ENCODE measurements at regions of chr18 and their contacts with region 1.

Region 1: GRCh38 chr18:31977270-31977872 is 34.4 kb upstream of the TRAPPC8 start:
- DNase-seq: peak in 2 of 5 donors; percentile 28 to 43
- ATAC-seq: peak in 3 of 4 donors; percentile 66 to 68 (median 67)
- H3K4me3 ChIP-seq: no peak overlapping the region
- H3K27ac ChIP-seq: no peak overlapping the region
- H3K4me1 ChIP-seq: peaks cover 0 to 2% (median 0%) of the 10 kb centered on the region in 12 donors
- H3K27me3 ChIP-seq: no peaks in the 10 kb centered on the region
- CTCF ChIP-seq: peak; percentile 61 to 82 (median 72)
- POLR2A ChIP-seq: no peak

Region 2: GRCh38 chr18:31555971-31556747 is 421.2 kb before region 1 on chr18:
- intact Hi-C with region 1: loop called in 7 of 10 experiments (anchors 2 to 10 kb)
- DNase-seq: peak in 1 of 5 donors; percentile 12
- ATAC-seq: peak in 3 of 4 donors; percentile 51 to 73 (median 63)
- H3K4me3 ChIP-seq: peak overlapping the region in 1 of 12 donors; percentile 21
- H3K27ac ChIP-seq: no peak overlapping the region
- H3K4me1 ChIP-seq: no peaks in the 10 kb centered on the region
- H3K27me3 ChIP-seq: peaks cover 0 to 12% (median 0%) of the 10 kb centered on the region in 9 donors
- CTCF ChIP-seq: peak; percentile 78 to 90 (median 82)
- POLR2A ChIP-seq: no peak

Region 3: DNA sequence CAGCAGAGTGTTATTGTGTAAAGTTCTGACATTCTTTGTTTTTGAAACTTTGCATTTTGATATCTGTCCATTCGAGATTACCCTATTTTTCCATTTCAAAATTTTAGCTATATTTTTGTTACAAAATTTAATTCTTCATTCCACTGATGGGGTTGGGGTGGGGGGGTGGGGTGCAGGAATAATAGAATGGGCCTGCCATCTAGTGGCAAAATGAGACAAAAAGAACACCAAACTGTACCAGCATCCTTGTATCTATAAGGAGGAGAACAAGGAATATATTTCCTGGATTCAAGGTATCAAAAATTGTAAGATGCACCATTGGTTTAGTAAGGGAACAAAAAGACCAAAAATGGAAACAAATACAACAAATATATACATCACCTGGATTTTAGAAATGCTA is 413.6 kb before region 1 on chr18:
- intact Hi-C with region 1: loop called in 6 of 10 experiments (anchors 10 kb)
- DNase-seq: no peak
- ATAC-seq: no peak
- H3K4me3 ChIP-seq: no peak overlapping the region
- H3K27ac ChIP-seq: no peak overlapping the region
- H3K4me1 ChIP-seq: peaks cover 0 to 5% (median 0%) of the 10 kb centered on the region in 12 donors
- H3K27me3 ChIP-seq: peaks cover 0 to 12% (median 0%) of the 10 kb centered on the region in 9 donors
- CTCF ChIP-seq: peak in 5 of 12 donors; percentile 5 to 28 (median 22)
- POLR2A ChIP-seq: no peak

Region 4: DNA sequence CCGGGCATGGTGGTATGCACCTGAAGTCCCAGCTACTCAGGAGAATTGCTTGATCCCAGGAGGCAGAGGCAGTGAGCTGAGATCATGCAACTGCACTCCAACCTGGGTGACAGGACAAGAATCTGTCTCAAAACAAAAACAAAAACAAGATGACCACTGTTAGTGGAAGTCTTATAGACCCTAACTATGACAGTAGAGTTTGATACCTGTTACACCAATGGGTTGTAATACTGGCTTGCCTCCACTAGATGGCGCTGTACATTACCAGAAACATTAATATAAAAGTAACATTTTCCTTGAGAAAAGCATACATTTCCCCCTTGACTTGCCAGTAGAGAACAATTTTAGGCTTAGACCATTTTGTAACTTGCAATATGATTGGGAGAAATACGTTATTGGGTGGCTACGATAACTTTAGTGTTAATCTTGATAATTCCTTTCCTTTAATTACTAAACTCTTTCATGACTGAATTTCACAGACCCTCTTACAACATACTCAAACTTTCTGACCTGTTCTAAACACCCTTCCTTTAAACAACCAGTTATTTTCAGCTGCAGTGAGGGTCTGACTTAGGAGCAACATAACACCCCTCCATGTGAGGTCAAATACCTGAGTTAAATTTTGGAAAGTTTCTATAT is 236.2 kb before region 1 on chr18:
- intact Hi-C with region 1: loop called (anchors 1 to 5 kb)
- DNase-seq: no peak
- ATAC-seq: no peak
- H3K4me3 ChIP-seq: no peak overlapping the region
- H3K27ac ChIP-seq: no peak overlapping the region
- H3K4me1 ChIP-seq: peaks cover 0 to 7% (median 0%) of the 10 kb centered on the region in 12 donors
- H3K27me3 ChIP-seq: no peaks in the 10 kb centered on the region
- CTCF ChIP-seq: peak; percentile 82 to 95 (median 91)
- POLR2A ChIP-seq: no peak

Region 5: DNA sequence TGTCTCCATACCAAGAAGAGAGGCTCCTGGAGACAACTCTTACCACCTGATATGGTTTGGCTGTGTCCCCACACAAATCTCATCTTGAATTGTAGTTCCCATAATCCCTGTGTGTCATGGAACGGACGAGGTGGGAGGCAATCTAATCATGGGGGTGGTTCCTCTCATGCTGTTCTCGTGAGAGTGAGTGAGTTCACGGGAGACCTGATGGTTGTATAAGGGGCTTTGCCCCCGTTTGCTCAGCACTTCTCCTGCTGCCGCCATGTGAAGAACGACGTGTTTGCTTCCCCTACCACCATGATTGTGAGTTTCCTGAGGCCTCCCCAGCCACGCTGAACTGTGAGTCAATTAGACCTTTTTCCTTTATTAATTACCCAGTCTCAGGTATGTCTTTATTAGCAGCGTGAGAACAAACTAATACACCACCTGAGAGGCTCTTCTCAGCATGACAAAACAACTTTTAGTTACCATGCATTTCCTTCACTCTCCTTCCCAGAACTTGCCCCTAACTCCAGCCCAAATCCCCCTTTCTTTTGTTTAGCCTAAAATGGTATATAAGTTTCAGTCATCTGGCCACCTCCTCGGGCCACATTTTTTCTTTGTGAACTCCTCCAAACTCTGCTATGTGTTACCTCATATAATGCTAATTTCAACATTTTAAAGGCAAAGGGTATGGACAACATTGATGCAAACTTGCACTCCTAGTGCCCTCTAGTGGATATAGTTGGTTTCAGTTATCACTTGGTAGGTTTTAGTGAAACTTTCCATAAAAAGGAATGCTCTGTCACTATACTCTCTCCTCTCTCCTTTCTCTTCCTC is 158.1 kb before region 1 on chr18:
- intact Hi-C with region 1: loop called in 2 of 10 experiments (anchors 10 kb)
- DNase-seq: no peak
- ATAC-seq: peak in 1 of 4 donors; percentile 56
- H3K4me3 ChIP-seq: no peak overlapping the region
- H3K27ac ChIP-seq: no peak overlapping the region
- H3K4me1 ChIP-seq: peaks cover 0 to 6% (median 0%) of the 10 kb centered on the region in 12 donors
- H3K27me3 ChIP-seq: no peaks in the 10 kb centered on the region
- CTCF ChIP-seq: peak; percentile 53 to 79 (median 70)
- POLR2A ChIP-seq: no peak

Region 6: GRCh38 chr18:31918733-31919132 is 58.6 kb before region 1 on chr18:
- intact Hi-C with region 1: no loop called
- DNase-seq: no peak
- ATAC-seq: no peak
- H3K4me3 ChIP-seq: no peak overlapping the region
- H3K27ac ChIP-seq: no peak overlapping the region
- H3K4me1 ChIP-seq: peaks cover 0 to 5% (median 0%) of the 10 kb centered on the region in 12 donors
- H3K27me3 ChIP-seq: no peaks in the 10 kb centered on the region
- CTCF ChIP-seq: no peak
- POLR2A ChIP-seq: no peak

Region 7: DNA sequence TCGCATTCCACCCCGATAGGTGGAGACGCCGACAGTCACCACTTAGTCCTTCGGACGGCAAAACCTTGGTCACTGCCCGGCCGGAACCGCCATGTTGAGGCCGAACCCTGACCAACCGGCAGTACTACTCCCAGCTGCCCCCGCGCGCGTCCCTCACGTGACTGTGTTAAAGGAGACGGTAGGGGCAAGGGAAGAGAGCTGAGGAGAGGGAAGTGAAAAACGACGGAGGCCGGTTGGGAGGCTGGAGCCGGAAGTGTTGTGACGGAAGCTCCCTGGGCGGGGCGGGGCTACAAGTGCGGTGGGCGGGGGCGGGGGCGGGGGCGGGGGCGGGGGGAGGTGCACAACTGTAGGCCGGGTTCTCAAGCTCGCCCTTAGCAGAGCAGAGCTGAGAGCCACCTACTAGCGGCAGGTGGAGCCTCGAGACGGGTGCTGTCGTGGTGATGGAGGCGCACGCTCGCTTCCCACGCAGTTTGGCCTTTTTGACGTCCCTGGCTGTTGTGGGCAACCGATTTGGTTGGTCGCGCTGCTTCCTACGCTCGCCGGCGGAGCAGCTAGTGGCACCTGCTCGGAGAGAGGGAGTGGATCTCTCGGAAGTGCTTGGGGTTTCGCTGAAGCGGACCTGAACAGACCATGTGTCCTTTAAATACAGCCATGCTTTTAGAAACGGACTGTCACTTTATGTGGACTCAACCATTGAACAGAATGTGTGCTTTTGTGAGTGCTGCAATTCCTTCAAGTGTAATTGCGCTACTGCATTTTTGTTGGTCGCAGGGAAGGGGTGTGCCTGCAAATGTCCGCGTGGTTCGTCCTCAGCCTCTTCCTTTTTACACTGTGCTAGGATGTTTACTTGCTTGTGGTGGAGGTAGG is 34.1 kb before region 1 on chr18 and contains the start of gene TRAPPC8:
- intact Hi-C with region 1: loop called in 1 of 10 experiments (anchors 2 kb)
- DNase-seq: peak; percentile 98 to 99 (median 98)
- ATAC-seq: peak; percentile 99
- H3K4me3 ChIP-seq: peak within 1 kb of the TSS; percentile 70 to 97 (median 86)
- H3K27ac ChIP-seq: peak within 1 kb of the TSS; percentile 80 to 95 (median 92)
- H3K4me1 ChIP-seq: peaks cover 3 to 45% (median 30%) of the 10 kb centered on the region in 12 donors
- H3K27me3 ChIP-seq: no peaks in the 10 kb centered on the region
- CTCF ChIP-seq: peak in 3 of 12 donors; percentile 28 to 39 (median 37)
- POLR2A ChIP-seq: no peak
- total RNA-seq, gene TRAPPC8: 25.5 to 41.9 (median 31.0) TPM